ENCODE measurements at regions of chr22 and their contacts with region 1.

Region 1: GRCh38 chr22:17095538-17095937 is 10.7 kb downstream of the IL17RA start:
- DNase-seq: peak; percentile 64
- ATAC-seq: peak; percentile 82
- H3K4me3 Mint-ChIP-seq: no peak overlapping the region
- H3K27ac Mint-ChIP-seq: no peak overlapping the region
- H3K4me1 Mint-ChIP-seq: peaks cover 8% of the 10 kb centered on the region
- H3K27me3 Mint-ChIP-seq: no peaks in the 10 kb centered on the region
- CTCF ChIP-seq: peak; percentile 32; the same call in 1 of the 2 replicates

Region 2: DNA sequence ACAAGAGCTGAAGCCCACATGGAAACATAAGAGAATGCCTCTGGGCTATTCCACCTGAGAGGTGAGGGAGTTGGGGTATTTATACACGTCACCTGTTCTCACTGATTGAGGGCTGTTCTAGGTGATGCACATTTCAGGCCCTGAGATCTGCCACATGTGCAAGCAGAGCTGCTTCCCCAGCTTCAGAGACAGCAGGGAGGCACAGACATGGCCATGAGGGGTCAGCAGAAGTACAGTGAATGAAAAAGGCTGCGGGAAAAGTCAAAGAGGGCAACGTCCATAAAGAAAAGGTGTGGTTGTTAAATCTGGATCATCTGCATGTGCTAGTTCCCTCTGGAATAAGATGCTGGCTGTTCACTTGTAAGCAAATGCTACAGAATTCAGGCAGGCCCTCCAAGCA is 163.0 kb before region 1 on chr22:
- CTCF ChIA-PET with region 1: no interaction called
- POLR2A ChIA-PET with region 1: no interaction called
- DNase-seq: no peak
- ATAC-seq: no peak
- H3K4me3 Mint-ChIP-seq: no peak overlapping the region
- H3K27ac Mint-ChIP-seq: no peak overlapping the region
- H3K4me1 Mint-ChIP-seq: no peaks in the 10 kb centered on the region
- H3K27me3 Mint-ChIP-seq: peaks cover 19% of the 10 kb centered on the region
- CTCF ChIP-seq: no peak

Region 3: GRCh38 chr22:17057959-17058814 is 37.4 kb before region 1 on chr22:
- CTCF ChIA-PET with region 1: interaction called, 19 read pairs
- POLR2A ChIA-PET with region 1: no interaction called
- DNase-seq: peak; percentile 73
- ATAC-seq: peak; percentile 88
- H3K4me3 Mint-ChIP-seq: no peak overlapping the region
- H3K27ac Mint-ChIP-seq: no peak overlapping the region
- H3K4me1 Mint-ChIP-seq: no peaks in the 10 kb centered on the region
- H3K27me3 Mint-ChIP-seq: peaks cover 17% of the 10 kb centered on the region
- CTCF ChIP-seq: peak; percentile 79

Region 4: DNA sequence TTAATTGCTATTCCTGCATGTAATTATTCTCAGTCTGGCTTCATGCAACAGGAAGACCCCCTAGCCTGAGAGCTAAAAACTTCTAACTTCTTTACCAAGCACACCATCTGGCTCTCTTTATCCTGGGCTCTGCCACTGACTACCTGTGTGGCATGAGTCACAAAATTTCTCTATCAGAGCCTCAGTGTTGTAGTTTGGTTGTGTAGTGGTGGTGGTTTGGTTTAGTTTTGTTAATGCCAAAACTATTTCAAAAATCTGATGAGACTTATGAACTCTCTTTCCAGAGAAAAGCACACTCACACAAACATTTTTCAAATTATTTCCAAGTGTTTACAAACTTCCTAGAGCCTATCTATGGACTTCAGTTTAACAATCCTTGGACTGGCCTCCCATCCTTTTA is 18.3 kb before region 1 on chr22:
- CTCF ChIA-PET with region 1: interaction called, 27 read pairs
- POLR2A ChIA-PET with region 1: no interaction called
- DNase-seq: no peak
- ATAC-seq: no peak
- H3K4me3 Mint-ChIP-seq: no peak overlapping the region
- H3K27ac Mint-ChIP-seq: no peak overlapping the region
- H3K4me1 Mint-ChIP-seq: no peaks in the 10 kb centered on the region; the same call in 1 of the 2 replicates
- H3K27me3 Mint-ChIP-seq: no peaks in the 10 kb centered on the region
- CTCF ChIP-seq: no peak

Region 5: DNA sequence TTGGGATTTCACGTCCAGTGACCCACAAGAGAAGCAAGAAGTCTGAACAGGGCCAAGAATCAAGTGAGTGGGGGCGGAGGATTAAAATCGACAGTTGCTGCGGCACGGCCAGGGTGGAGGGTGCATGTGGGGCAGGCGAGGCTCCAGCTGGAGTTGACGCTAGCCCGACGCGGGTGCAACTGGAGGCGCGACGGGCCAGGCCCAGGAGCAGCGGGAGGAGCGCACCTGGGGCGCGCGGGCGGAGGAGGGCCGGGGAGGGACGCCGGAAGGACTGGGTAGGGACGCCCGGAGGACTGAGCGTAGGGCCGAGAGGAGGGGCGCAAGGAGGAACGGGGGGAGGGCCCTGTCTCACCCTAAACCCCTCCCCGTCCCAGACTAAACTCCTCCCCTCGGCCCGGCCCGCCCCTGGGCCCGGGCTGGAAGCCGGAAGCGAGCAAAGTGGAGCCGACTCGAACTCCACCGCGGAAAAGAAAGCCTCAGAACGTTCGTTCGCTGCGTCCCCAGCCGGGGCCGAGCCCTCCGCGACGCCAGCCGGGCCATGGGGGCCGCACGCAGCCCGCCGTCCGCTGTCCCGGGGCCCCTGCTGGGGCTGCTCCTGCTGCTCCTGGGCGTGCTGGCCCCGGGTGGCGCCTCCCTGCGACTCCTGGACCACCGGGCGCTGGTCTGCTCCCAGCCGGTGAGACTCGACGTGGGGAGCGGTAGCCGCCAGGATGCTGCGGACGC is 10.8 kb before region 1 on chr22 and contains the start of gene IL17RA:
- CTCF ChIA-PET with region 1: interaction called, 18 read pairs
- POLR2A ChIA-PET with region 1: no interaction called
- DNase-seq: peak; percentile 93
- ATAC-seq: peak; percentile 99
- H3K4me3 Mint-ChIP-seq: peak within 1 kb of the TSS; percentile 71
- H3K27ac Mint-ChIP-seq: no peak within 1 kb of the TSS
- H3K4me1 Mint-ChIP-seq: peaks cover 25% of the 10 kb centered on the region
- H3K27me3 Mint-ChIP-seq: peaks cover 34% of the 10 kb centered on the region
- CTCF ChIP-seq: no peak
- total RNA-seq, gene IL17RA: 7.9 to 8.7 TPM (median 8.2 TPM) in 3 replicates

Region 6: GRCh38 chr22:17106785-17107546 is 11.4 kb after region 1 on chr22:
- CTCF ChIA-PET with region 1: interaction called, 19 read pairs
- POLR2A ChIA-PET with region 1: no interaction called
- DNase-seq: no peak
- ATAC-seq: no peak
- H3K4me3 Mint-ChIP-seq: no peak overlapping the region
- H3K27ac Mint-ChIP-seq: no peak overlapping the region
- H3K4me1 Mint-ChIP-seq: peaks cover 4% of the 10 kb centered on the region; the same call in 1 of the 2 replicates
- H3K27me3 Mint-ChIP-seq: no peaks in the 10 kb centered on the region
- CTCF ChIP-seq: no peak

Region 7: GRCh38 chr22:17112486-17113042 is 17.0 kb after region 1 on chr22:
- CTCF ChIA-PET with region 1: interaction called, 19 read pairs
- POLR2A ChIA-PET with region 1: no interaction called
- DNase-seq: no peak
- ATAC-seq: no peak
- H3K4me3 Mint-ChIP-seq: no peak overlapping the region
- H3K27ac Mint-ChIP-seq: no peak overlapping the region; the same call in 1 of the 2 replicates
- H3K4me1 Mint-ChIP-seq: peaks cover 14% of the 10 kb centered on the region
- H3K27me3 Mint-ChIP-seq: no peaks in the 10 kb centered on the region
- CTCF ChIP-seq: no peak

Region 8: DNA sequence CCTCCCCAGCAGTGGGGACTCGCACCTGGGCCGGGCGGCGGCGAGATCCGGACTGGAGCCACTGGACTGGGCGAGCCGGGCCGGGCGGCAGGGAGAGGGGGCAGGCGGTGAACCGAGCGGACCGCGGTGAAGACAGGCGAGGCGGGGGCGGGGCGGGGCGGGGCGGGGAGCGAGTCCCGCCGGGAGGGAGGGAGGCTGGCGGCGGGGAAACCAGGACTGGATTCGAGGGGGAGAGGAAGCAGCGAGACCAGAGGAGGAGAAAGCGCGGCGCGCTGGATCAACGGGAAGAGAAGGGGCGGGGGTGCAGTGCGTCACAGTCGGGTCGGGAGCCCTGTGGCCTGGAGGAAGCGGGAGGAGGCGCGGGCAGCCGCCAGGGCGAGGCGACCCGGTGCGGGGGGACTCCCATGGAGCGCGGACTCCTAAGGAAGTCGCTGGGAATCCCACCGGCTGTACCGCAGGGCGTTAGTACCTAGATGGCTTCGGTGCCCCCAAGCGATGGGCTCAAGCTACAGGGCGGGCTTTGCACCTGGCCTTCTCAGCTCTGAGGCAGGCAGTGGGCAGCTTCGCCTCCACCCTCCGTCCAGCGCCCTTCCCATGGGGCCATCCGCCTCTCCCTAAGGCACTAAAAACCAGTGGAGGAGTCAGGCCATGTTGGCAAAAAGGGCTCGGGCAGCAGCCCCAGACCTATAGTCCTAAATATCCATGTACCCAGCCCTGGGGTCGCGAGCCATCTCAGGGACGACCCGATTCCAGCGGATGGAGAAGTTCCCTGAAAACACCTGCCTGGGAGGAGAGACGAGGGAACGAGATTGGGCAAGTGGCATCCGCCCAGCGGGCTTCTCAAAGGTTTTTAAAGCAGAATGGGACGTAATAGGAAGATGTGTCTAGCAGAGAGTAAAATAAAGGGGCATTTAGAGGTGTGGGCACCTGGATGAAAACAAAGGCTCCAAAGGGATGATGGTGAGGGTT is 26.0 kb after region 1 on chr22 and contains the start of gene TMEM121B:
- CTCF ChIA-PET with region 1: interaction called, 13 read pairs
- POLR2A ChIA-PET with region 1: no interaction called
- DNase-seq: peak; percentile 94
- ATAC-seq: peak; percentile 74
- H3K4me3 Mint-ChIP-seq: peak within 1 kb of the TSS; percentile 76
- H3K27ac Mint-ChIP-seq: peak within 1 kb of the TSS; percentile 44
- H3K4me1 Mint-ChIP-seq: peaks cover 24% of the 10 kb centered on the region
- H3K27me3 Mint-ChIP-seq: peaks cover 3% of the 10 kb centered on the region; the same call in 1 of the 2 replicates
- CTCF ChIP-seq: no peak
- total RNA-seq, gene TMEM121B: 7.5 to 8.3 TPM (median 7.7 TPM) in 3 replicates

Measured in WTC11 (cell line).